Prostate gland (tissue), 2 donors: ENCODE measurements at regions of chr2 and their contacts with region 1.

Region 1: DNA sequence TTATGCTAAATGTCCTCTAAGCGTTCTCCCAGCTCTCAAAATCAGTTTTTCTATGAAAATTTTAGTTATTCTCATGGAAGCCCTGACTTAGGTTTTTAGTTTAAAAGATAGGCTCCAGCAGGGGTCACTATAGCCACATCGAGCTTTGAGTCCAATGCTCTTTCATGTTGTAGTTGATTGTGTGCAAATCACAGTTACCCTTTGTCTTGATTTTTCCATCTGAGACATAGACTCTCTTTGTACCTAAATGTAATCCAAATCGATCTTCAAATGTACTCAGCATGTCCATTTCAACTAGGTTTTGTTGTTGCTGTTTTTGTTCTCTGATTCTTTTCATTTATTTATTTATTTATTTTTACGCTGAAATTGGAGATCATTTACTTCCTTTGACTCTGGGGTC is 26.4 kb upstream of the MSTN start:
- DNase-seq: peak; percentile 46
- H3K4me3 ChIP-seq: no peak overlapping the region
- H3K27ac ChIP-seq: no peak overlapping the region
- H3K4me1 ChIP-seq: no peaks in the 10 kb centered on the region
- H3K27me3 ChIP-seq: no peaks in the 10 kb centered on the region
- CTCF ChIP-seq: peak; percentile 11 to 80 (median 72)
- POLR2A ChIP-seq: no peak

Region 2: DNA sequence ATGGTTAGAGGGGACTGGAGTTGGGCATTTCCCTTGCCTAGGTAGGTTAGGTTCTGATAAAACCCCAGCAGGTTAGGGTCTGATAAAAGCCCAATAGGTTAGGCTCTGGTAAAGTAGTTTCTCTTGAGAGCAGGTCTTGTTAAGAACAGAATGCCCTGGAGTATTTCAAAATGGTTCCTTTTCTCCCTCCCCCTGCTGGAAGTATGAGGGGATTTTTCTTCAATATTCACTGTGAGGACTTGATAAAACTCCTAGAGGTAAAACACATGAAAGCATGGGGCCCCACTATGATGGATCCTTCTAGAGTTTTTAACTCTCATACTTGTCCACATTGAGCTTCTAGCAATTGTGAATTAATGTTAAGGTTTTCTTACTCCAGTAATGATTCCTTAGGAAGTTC is 386.8 kb before region 1 on chr2:
- intact Hi-C with region 1: no loop called
- DNase-seq: no peak
- H3K4me3 ChIP-seq: no peak overlapping the region
- H3K27ac ChIP-seq: no peak overlapping the region
- H3K4me1 ChIP-seq: no peaks in the 10 kb centered on the region
- H3K27me3 ChIP-seq: no peaks in the 10 kb centered on the region
- CTCF ChIP-seq: no peak
- POLR2A ChIP-seq: no peak

Region 3: DNA sequence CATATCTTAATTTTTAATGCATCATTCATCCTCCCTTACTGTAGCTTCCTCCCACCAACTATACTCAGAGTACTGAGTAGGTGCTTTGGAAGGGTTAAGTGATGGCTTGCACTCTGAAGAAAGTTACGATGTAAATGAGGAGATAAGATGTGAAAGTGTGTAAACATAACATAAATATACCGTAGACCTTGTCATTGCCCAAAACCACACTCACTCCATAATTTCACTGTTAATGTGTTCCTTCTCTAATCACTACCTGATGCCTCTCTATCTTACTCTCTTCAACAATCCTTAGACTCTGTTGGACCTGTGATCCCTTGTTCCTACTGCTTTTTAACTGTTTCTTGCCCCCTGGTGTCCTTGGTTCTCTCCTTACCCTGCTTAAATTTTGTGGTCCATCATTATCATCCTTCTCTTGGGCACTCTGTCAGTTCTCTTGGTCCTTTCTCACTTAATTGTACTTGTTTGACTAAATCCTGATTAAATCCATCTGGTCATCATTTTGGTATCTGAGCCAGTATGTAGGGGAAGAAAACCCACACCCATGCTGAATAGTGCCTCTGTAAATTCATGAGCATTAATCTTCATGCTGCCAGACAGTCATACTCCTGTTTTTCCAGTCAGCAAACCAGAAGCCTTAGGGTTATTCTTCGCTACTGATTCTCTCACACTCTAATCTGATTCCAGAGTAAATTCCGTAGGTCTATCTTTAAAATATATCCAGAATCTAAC is 259.6 kb before region 1 on chr2:
- intact Hi-C with region 1: no loop called
- DNase-seq: no peak
- H3K4me3 ChIP-seq: no peak overlapping the region
- H3K27ac ChIP-seq: no peak overlapping the region
- H3K4me1 ChIP-seq: no peaks in the 10 kb centered on the region
- H3K27me3 ChIP-seq: no peaks in the 10 kb centered on the region
- CTCF ChIP-seq: no peak
- POLR2A ChIP-seq: no peak

Region 4: GRCh38 chr2:190277234-190278112 is 188.6 kb after region 1 on chr2:
- intact Hi-C with region 1: loop called (anchors 5 kb)
- DNase-seq: no peak
- H3K4me3 ChIP-seq: no peak overlapping the region
- H3K27ac ChIP-seq: no peak overlapping the region
- H3K4me1 ChIP-seq: no peaks in the 10 kb centered on the region
- H3K27me3 ChIP-seq: no peaks in the 10 kb centered on the region
- CTCF ChIP-seq: peak in 2 of 4 experiments; percentile 39 to 47
- POLR2A ChIP-seq: no peak

Region 5: GRCh38 chr2:190319555-190320498 is 230.9 kb after region 1 on chr2 and contains the start of gene HIBCH:
- intact Hi-C with region 1: loop called (anchors 5 kb)
- DNase-seq: peak; percentile 99
- H3K4me3 ChIP-seq: peak within 1 kb of the TSS; percentile 64 to 67
- H3K27ac ChIP-seq: peak within 1 kb of the TSS; percentile 93 to 95
- H3K4me1 ChIP-seq: no peaks in the 10 kb centered on the region
- H3K27me3 ChIP-seq: no peaks in the 10 kb centered on the region
- CTCF ChIP-seq: peak; percentile 47 to 86 (median 78)
- POLR2A ChIP-seq: peak; percentile 89
- total RNA-seq, gene HIBCH: 25.3 to 27.8 TPM

Region 6: GRCh38 chr2:190369635-190370034 is 280.7 kb after region 1 on chr2:
- intact Hi-C with region 1: loop called (anchors 5 kb)
- DNase-seq: no peak
- H3K4me3 ChIP-seq: no peak overlapping the region
- H3K27ac ChIP-seq: no peak overlapping the region
- H3K4me1 ChIP-seq: no peaks in the 10 kb centered on the region
- H3K27me3 ChIP-seq: no peaks in the 10 kb centered on the region
- CTCF ChIP-seq: no peak
- POLR2A ChIP-seq: no peak

Region 7: DNA sequence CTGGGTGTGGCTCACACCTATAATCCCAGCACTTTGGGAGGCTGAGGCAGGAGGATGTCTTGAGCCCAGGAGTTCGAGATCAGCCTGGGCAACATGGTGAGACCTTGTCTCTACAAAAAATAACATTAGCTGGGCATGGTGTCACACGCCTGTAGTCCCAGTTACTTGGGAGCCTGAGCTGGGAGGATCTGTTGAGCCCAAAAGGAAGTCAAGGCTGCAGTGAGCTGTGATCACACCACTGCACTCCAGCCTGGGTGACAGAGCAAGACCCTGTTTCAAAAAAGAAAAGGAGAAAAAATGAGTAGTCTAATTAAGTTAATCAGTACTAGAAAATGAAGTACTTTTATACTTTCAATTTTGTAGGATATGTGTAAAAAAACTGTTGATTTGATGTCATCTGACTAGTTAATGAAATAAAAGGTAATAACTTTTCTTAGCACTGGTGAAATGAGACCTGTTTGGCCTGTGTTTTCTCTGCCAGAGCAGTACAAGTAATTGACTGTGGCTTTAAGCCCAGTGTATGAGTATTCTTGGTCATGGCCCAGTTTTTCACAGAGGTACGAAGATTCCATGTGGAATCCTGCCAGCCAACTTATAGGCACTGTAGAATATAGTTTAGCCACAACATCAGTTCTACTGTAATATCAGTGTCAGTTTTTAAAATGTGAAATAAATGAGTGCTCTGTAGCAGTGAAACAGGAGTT is 355.0 kb after region 1 on chr2:
- intact Hi-C with region 1: no loop called
- DNase-seq: peak; percentile 26
- H3K4me3 ChIP-seq: no peak overlapping the region
- H3K27ac ChIP-seq: no peak overlapping the region
- H3K4me1 ChIP-seq: no peaks in the 10 kb centered on the region
- H3K27me3 ChIP-seq: no peaks in the 10 kb centered on the region
- CTCF ChIP-seq: no peak
- POLR2A ChIP-seq: no peak

Region 8: DNA sequence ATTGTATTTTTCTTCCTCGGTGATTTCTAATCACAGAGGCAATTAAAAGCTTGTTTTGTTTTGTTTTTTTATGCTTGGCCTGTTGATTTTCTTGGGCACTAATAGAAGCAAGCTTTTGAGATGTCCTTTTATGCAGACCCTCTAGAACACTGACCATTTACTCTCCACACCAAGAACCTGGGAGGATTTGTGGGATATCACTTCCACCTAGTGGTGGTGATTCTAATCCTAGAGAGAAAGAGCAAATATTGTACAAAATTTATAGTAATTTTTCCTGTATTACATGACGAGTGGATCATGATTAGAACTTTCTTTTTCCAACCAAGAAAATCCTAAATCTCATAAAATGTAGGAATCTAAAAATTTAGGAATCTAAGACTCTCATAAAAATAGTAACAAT is 422.2 kb after region 1 on chr2:
- intact Hi-C with region 1: loop called (anchors 10 kb)
- DNase-seq: no peak
- H3K4me3 ChIP-seq: no peak overlapping the region
- H3K27ac ChIP-seq: no peak overlapping the region
- H3K4me1 ChIP-seq: no peaks in the 10 kb centered on the region
- H3K27me3 ChIP-seq: no peaks in the 10 kb centered on the region
- CTCF ChIP-seq: peak in 3 of 4 experiments; percentile 26 to 74 (median 39)
- POLR2A ChIP-seq: no peak